ENCODE measurements at regions of chr13 and their contacts with region 1.

Region 1: GRCh38 chr13:49436890-49437289 is 7.0 kb downstream of the CAB39L start:
- DNase-seq: no peak
- ATAC-seq: no peak
- H3K4me3 ChIP-seq: no peak overlapping the region
- H3K4me3 Mint-ChIP-seq: no peak overlapping the region
- H3K27ac ChIP-seq: no peak overlapping the region
- H3K27ac Mint-ChIP-seq: no peak overlapping the region
- H3K4me1 ChIP-seq: peaks cover 13 to 14% of the 10 kb centered on the region in 2 donors
- H3K4me1 Mint-ChIP-seq: peaks cover 21% of the 10 kb centered on the region
- H3K27me3 ChIP-seq: no peaks in the 10 kb centered on the region
- H3K27me3 Mint-ChIP-seq: no peaks in the 10 kb centered on the region
- CTCF ChIP-seq: no peak

Region 2: GRCh38 chr13:48028052-48028451 is 1408.8 kb before region 1 on chr13:
- CTCF ChIA-PET with region 1: no interaction called
- POLR2A ChIA-PET with region 1: no interaction called
- intact Hi-C with region 1: no loop called
- DNase-seq: no peak
- ATAC-seq: no peak
- H3K4me3 ChIP-seq: no peak overlapping the region
- H3K4me3 Mint-ChIP-seq: no peak overlapping the region
- H3K27ac ChIP-seq: no peak overlapping the region
- H3K27ac Mint-ChIP-seq: no peak overlapping the region
- H3K4me1 ChIP-seq: no peaks in the 10 kb centered on the region
- H3K4me1 Mint-ChIP-seq: no peaks in the 10 kb centered on the region
- H3K27me3 ChIP-seq: no peaks in the 10 kb centered on the region
- H3K27me3 Mint-ChIP-seq: no peaks in the 10 kb centered on the region
- CTCF ChIP-seq: no peak

Region 3: DNA sequence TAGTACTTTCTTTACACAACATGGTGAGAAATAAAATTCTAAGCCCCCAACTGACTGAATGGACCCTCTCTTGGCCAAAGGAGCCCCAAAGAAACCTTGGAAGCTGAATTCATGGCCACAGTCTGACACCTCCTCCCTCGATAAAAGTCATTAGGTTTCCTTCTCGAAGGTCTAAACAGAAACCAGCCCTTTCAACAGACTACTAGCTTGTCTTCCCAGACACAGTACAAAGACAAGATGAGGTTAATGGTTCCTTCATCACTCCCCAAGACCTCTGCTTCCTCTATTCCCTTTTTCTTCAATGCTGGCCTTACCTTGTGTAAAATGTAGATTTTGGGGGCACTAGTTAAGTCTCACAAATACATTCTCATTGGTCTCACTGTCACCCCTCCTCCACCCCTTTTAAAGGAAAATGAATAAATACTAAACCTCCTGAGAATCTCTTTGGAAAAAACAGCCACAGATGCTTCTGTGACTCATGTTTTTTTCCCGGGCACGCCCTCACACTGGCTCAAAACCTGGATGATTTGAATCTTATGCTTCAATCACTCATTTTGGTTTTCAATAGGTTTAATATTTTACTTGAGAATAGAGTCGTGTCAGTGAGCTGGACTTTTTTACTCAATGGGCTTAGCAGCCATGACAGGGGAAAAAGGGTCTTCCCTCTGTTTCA is 1276.1 kb before region 1 on chr13:
- CTCF ChIA-PET with region 1: no interaction called
- POLR2A ChIA-PET with region 1: no interaction called
- intact Hi-C with region 1: no loop called
- DNase-seq: no peak
- ATAC-seq: no peak
- H3K4me3 ChIP-seq: no peak overlapping the region
- H3K4me3 Mint-ChIP-seq: no peak overlapping the region
- H3K27ac ChIP-seq: no peak overlapping the region
- H3K27ac Mint-ChIP-seq: no peak overlapping the region
- H3K4me1 ChIP-seq: peaks cover 19 to 26% of the 10 kb centered on the region in 2 donors
- H3K4me1 Mint-ChIP-seq: peaks cover 17% of the 10 kb centered on the region
- H3K27me3 ChIP-seq: no peaks in the 10 kb centered on the region
- H3K27me3 Mint-ChIP-seq: peaks cover 15% of the 10 kb centered on the region
- CTCF ChIP-seq: no peak

Region 4: DNA sequence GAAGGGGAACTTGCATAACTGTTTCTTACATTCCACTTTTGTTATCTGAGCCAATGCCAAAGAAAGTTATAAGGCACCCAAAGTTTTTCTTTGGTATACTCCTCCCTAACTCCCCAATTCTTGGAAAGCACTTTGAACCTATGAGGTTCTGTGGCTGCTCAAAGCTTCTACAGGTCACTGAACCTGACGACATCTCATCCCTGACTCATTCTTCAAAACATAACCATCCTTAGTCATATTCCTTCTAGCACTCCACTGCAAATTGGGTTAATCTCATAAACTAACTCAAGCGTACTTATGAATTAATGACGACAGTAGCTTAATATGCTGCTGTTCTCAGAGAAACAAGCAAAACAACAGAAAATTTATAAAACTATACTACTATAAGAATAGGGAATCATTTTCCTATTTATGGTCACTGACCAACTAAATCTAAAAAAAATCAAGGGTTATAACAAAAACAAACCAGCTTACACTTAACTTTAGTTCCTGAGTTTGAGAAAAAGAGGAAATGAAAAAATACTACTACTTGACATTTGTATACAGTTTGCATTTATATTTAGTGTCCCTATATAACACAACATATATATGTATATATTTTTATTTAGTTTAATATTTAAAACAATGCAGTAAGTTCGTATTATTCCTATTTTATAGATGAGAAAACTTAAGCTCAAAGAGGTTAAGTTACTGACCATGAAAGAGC is 62.2 kb before region 1 on chr13:
- CTCF ChIA-PET with region 1: no interaction called
- POLR2A ChIA-PET with region 1: interaction called, 3 read pairs
- intact Hi-C with region 1: loop called (anchors 5 kb)
- DNase-seq: peak; percentile 12
- ATAC-seq: peak; percentile 63
- H3K4me3 ChIP-seq: peak overlapping the region in 1 of 5 experiments; percentile 32
- H3K4me3 Mint-ChIP-seq: peak overlapping the region; percentile 18
- H3K27ac ChIP-seq: peak overlapping the region in 1 of 2 donors; percentile 55
- H3K27ac Mint-ChIP-seq: peak overlapping the region; percentile 47
- H3K4me1 ChIP-seq: peaks cover 26% of the 10 kb centered on the region in 2 donors
- H3K4me1 Mint-ChIP-seq: peaks cover 49% of the 10 kb centered on the region
- H3K27me3 ChIP-seq: no peaks in the 10 kb centered on the region
- H3K27me3 Mint-ChIP-seq: no peaks in the 10 kb centered on the region
- CTCF ChIP-seq: no peak

Region 5: DNA sequence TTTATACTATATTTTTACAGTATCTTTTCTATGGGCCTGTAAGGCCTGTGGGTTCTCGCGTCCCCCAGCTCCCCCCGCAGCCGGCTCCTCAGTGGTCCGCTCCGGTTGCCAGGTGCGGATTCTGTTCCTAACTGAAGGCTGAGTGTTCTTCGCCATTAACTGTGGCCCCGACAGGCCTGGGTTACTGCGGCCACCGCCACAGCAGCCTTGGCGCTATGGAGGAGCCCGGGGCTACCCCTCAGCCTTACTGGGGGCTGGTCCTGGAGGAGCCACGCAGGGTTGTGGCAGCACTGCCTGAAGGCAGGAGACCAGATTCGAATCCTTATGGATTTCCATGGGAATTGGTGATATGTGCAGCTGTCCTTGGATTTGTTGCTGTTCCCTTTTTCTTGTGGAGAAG is 453.5 kb after region 1 on chr13:
- CTCF ChIA-PET with region 1: no interaction called
- POLR2A ChIA-PET with region 1: no interaction called
- intact Hi-C with region 1: no loop called
- DNase-seq: no peak
- ATAC-seq: no peak
- H3K4me3 ChIP-seq: no peak overlapping the region
- H3K4me3 Mint-ChIP-seq: no peak overlapping the region
- H3K27ac ChIP-seq: no peak overlapping the region
- H3K27ac Mint-ChIP-seq: no peak overlapping the region
- H3K4me1 ChIP-seq: no peaks in the 10 kb centered on the region
- H3K4me1 Mint-ChIP-seq: no peaks in the 10 kb centered on the region
- H3K27me3 ChIP-seq: no peaks in the 10 kb centered on the region
- H3K27me3 Mint-ChIP-seq: no peaks in the 10 kb centered on the region
- CTCF ChIP-seq: no peak

Measured in B cell (primary cell).